Ascending aorta (tissue), 2 donors: ENCODE measurements at regions of chr12 and their contacts with region 1.

Region 1: GRCh38 chr12:50924439-50925341 is 27.7 kb upstream of the HIGD1C start:
- DNase-seq: peak; percentile 63 to 96
- H3K4me3 ChIP-seq: peak overlapping the region; percentile 75 to 80
- H3K27ac ChIP-seq: peak overlapping the region; percentile 79 to 82
- H3K4me1 ChIP-seq: peaks cover 0 to 24% of the 10 kb centered on the region in 2 donors
- H3K27me3 ChIP-seq: no peaks in the 10 kb centered on the region
- CTCF ChIP-seq: no peak

Region 2: GRCh38 chr12:50763639-50764285 is 160.9 kb before region 1 on chr12 and contains the start of gene ATF1:
- intact Hi-C with region 1: loop called (anchors 5 kb)
- DNase-seq: peak; percentile 73 to 96
- H3K4me3 ChIP-seq: peak within 1 kb of the TSS; percentile 83 to 94
- H3K27ac ChIP-seq: peak within 1 kb of the TSS; percentile 96 to 98
- H3K4me1 ChIP-seq: peaks cover 0 to 15% of the 10 kb centered on the region in 2 donors
- H3K27me3 ChIP-seq: no peaks in the 10 kb centered on the region
- CTCF ChIP-seq: no peak
- total RNA-seq, gene ATF1: 6.8 TPM

Region 3: GRCh38 chr12:50825372-50825838 is 99.3 kb before region 1 on chr12:
- intact Hi-C with region 1: loop called (anchors 2 kb)
- DNase-seq: no peak
- H3K4me3 ChIP-seq: no peak overlapping the region
- H3K27ac ChIP-seq: peak overlapping the region; percentile 50 to 51
- H3K4me1 ChIP-seq: no peaks in the 10 kb centered on the region
- H3K27me3 ChIP-seq: no peaks in the 10 kb centered on the region
- CTCF ChIP-seq: peak; percentile 37 to 45 (median 44)

Region 4: GRCh38 chr12:50986966-50987737 is 62.5 kb after region 1 on chr12:
- intact Hi-C with region 1: loop called (anchors 1 kb)
- DNase-seq: peak in 1 of 2 donors; percentile 67
- H3K4me3 ChIP-seq: no peak overlapping the region
- H3K27ac ChIP-seq: peak overlapping the region in 1 of 2 donors; percentile 81
- H3K4me1 ChIP-seq: peaks cover 7 to 35% of the 10 kb centered on the region in 2 donors
- H3K27me3 ChIP-seq: no peaks in the 10 kb centered on the region
- CTCF ChIP-seq: peak; percentile 48 to 72 (median 56)